ENCODE measurements at regions of chr16 and their contacts with region 1.

Region 1: DNA sequence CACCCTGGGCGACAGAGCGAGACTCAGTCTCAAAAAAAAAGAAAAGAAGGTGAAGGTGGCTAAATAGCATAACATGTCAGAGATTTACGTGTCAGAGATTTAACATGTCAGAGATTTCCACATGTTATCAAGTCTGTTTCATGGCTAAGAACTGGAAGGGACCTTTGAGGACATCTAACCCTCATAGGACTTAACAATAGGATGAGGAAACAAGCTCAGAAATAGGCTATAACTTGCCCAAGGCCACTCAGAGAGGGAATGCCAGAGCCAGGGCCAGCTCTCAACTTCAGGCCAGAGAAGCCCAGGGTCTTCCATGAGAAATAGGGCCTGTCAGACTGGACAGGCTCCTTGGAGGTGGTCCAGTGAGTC is 26.8 kb upstream of the ZNF629 start:
- DNase-seq: no peak
- CTCF ChIP-seq: no peak

Region 2: DNA sequence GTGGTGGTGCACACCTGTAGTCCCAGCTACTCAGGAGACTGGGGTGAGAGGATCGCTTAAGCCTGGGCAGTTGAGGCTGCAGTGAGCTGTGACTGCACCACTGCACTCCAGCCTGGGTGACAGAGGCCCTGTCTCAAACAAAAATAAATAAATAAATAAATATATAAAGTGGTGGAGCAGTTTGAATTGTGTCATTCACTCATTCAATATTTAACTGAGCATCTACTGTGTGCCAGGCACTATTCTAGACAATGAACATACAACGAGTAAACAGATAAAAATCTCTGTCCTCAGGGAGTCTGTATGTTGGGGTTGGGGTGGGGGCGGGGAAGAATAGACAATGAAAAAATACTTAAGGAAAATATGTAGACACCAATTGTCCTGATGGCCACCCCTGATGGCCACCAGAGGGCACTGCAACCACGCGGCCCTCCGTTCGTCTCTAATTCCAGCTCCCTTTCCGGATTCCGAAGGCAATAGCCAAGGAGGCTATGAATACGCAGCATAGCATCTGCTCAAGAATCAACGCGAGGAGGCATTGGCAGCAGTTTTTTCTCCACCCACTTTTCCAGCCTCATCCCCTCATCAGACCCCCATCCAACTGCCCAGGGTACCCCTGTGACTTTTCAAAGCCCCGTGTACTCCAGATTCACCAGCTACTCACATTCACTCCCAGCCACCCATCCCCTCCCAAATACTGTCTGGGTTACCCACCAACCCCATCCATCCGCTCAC is 1113.4 kb before region 1 on chr16:
- CTCF ChIA-PET with region 1: no interaction called
- POLR2A ChIA-PET with region 1: no interaction called
- DNase-seq: peak; percentile 73
- CTCF ChIP-seq: peak; percentile 56

Region 3: GRCh38 chr16:30767767-30768415 is 45.9 kb before region 1 on chr16:
- CTCF ChIA-PET with region 1: interaction called, 16 read pairs
- POLR2A ChIA-PET with region 1: no interaction called
- DNase-seq: no peak
- CTCF ChIP-seq: no peak

Region 4: DNA sequence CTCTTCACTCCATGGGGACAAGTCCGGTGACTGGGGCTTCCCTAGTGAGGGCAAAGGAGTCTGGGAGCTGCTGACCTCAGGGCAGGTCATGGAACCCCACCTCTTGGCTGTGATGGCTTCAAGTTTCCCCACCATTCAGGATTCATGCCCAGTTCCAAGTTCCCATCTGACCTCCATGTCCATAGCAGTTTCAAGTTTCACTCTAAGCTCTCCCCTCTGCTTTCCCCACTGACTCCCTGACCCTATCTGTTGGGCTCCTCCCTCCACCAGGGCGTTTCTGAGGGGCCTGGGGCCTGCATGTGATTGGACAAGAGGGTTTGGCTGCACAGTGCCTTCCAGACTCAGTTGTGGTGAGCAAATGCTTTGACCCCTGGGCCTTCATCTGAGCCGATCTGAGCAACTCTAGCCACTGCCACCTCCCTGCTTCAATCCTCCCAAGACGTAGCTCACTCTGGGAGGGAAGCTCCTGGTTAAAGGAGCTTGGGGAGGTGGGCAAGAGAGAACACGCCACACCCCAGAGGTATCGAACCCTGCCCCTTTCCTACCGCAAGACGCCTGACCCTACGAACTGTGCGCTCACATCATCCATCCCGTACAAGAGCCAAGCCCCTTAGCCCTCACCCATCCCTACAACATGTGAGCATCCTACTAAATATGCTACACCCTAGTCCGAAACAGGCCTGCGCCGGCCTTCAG is 35.1 kb before region 1 on chr16:
- CTCF ChIA-PET with region 1: interaction called, 13 read pairs
- POLR2A ChIA-PET with region 1: interaction called, 6 read pairs
- DNase-seq: no peak
- CTCF ChIP-seq: no peak

Region 5: GRCh38 chr16:30797670-30798309 is 16.0 kb before region 1 on chr16:
- CTCF ChIA-PET with region 1: interaction called, 39 read pairs
- POLR2A ChIA-PET with region 1: interaction called, 3 read pairs
- DNase-seq: no peak
- CTCF ChIP-seq: no peak

Measured in GM10248 (cell line).